PC-3 (cell line): ENCODE measurements at regions of chr6 and their contacts with region 1.

Region 1: DNA sequence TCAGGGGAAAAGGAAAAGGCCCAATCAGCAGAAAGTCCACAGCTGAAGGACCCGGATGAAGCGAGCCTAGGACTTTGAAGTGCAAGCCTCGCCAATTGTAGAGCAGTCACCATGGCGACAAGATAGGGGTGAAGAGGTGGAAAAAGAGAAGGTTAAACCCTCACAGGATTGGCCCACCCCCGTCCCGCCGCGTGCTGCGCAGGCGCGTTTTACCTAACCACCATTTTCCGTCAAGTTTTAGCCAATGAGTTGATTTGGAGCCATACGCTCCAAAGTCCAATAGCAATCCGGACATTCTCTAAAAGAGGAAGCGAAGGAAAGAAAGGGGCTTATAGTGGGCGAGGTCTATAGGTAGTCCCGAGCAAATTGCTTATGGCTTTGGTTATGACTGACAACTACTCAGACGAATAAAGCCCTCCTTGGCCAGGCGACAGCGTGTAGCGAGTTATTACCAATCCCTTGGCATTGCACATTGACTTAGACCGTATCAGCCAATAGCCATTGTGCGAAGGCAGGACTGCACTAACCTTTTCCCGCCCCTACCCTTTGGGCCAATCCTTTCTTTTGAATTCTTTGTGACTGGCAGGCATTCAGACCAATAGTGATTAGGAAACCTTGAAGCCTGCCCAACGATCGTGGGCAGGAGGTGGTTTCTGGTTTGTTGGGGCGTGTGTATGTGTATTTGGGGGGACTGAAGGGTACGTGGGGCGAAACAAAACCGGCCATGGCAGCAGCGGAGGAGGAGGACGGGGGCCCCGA is at the start of gene RNF5:
- DNase-seq: peak; percentile 100
- ATAC-seq: peak; percentile 86
- H3K4me3 ChIP-seq: peak within 1 kb of the TSS; percentile 94
- H3K27ac ChIP-seq: peak within 1 kb of the TSS; percentile 83
- H3K4me1 ChIP-seq: peaks cover 33% of the 10 kb centered on the region
- H3K27me3 ChIP-seq: no peaks in the 10 kb centered on the region
- CTCF ChIP-seq: no peak
- total RNA-seq, gene RNF5: 69.0 and 80.1 TPM in 2 replicates

Region 2: DNA sequence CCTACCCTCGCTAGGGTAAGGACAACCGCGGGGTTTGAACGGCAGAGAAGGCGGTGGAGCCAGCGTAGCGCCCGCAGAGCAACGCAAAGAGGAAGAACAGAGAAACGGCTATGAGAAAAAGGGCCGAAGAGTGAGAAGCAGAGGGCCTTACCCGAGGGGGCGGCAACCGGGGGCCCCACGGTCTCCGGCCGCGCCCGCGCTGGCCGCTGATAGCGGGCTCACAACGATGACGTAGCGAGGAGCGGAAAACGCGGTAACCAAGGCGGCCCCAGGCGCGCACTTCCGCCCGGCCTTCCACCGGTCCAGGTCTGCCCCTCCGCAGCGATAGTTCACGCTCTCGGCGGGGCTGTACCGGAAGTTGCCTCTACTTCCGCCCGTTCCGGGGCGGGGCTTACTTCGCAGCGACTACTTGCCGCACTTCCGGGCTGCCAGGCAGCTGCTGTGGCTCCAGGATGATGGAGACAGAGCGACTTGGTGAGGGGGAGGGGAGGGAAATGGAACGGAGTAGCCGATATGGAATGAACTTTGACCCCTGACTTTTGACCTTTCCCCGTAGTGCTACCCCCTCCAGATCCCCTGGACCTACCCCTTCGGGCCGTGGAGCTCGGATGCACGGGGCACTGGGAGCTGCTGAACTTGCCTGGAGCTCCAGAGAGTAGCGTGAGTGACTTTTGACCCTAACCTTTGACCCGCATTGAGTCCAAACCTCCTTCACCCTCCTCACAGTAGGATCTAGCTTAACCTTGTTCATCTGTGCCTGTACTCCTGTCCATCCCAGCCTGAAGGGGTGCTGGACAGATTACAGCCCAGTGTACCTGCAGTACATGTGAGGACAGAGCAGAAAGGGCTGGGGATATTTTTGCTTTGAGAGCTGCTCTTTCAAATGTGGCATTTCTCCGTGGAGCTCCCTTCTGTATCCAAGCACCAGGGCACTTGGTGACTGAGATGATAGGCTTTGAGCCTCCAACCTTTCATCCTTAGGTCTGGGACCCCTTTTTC is 218.9 kb before region 1 on chr6 and contains the starts of genes NELFE and SKIC2:
- CTCF ChIA-PET with region 1: no interaction called
- POLR2A ChIA-PET with region 1: no interaction called
- intact Hi-C with region 1: loop called (anchors 5 kb)
- DNase-seq: peak; percentile 99
- ATAC-seq: peak; percentile 100
- H3K4me3 ChIP-seq: peak within 1 kb of the TSS; percentile 96
- H3K27ac ChIP-seq: peak within 1 kb of the TSS; percentile 31
- H3K4me1 ChIP-seq: peaks cover 19% of the 10 kb centered on the region
- H3K27me3 ChIP-seq: no peaks in the 10 kb centered on the region
- CTCF ChIP-seq: no peak
- total RNA-seq, gene NELFE: 132 and 142 TPM in 2 replicates
- total RNA-seq, gene SKIC2: 81.9 and 95.0 TPM in 2 replicates

Region 3: GRCh38 chr6:32127717-32128592 is 50.0 kb before region 1 on chr6 and contains the start of gene ATF6B:
- CTCF ChIA-PET with region 1: no interaction called
- POLR2A ChIA-PET with region 1: no interaction called
- intact Hi-C with region 1: loop called (anchors 1 kb)
- DNase-seq: peak; percentile 98
- ATAC-seq: peak; percentile 89
- H3K4me3 ChIP-seq: peak within 1 kb of the TSS; percentile 90
- H3K27ac ChIP-seq: peak within 1 kb of the TSS; percentile 47
- H3K4me1 ChIP-seq: peaks cover 25% of the 10 kb centered on the region
- H3K27me3 ChIP-seq: no peaks in the 10 kb centered on the region
- CTCF ChIP-seq: no peak
- total RNA-seq, gene ATF6B: 33.4 and 35.7 TPM in 2 replicates

Region 4: DNA sequence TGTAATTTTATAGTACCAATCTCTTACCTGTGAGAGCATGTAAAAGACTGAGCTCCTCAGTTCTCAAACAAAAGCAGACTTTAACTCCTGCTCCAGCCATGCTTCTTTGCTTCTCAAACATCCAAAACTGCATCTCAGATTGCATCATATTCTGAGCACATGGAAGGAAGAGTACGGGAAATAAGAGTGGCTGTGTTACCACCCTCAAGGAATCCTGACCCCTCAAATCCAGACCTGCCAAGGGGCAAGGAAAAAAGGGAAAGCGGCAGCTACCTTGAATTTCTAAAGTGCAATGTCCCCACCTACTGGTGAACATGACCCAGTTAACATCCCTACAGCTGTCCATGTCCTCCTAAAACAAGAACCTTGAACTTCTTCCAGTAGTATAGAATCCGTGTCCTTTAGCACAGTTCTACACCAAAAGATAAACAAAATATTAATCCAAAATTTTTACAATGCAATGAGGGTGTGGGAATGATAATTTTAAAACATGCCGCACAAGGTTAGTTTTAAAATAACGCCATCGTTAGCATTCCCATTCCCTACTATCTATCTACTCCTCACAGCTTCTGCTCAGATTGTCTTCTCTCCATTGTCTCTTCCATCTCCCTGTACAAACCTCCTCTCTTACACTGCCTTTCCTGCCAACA is 522.5 kb after region 1 on chr6:
- CTCF ChIA-PET with region 1: no interaction called
- POLR2A ChIA-PET with region 1: no interaction called
- intact Hi-C with region 1: no loop called
- DNase-seq: peak; percentile 68
- ATAC-seq: peak; percentile 87
- H3K4me3 ChIP-seq: no peak overlapping the region
- H3K27ac ChIP-seq: no peak overlapping the region
- H3K4me1 ChIP-seq: no peaks in the 10 kb centered on the region
- H3K27me3 ChIP-seq: peaks cover 59% of the 10 kb centered on the region
- CTCF ChIP-seq: peak; percentile 91